ENCODE measurements at regions of chr17 and their contacts with region 1.

Region 1: DNA sequence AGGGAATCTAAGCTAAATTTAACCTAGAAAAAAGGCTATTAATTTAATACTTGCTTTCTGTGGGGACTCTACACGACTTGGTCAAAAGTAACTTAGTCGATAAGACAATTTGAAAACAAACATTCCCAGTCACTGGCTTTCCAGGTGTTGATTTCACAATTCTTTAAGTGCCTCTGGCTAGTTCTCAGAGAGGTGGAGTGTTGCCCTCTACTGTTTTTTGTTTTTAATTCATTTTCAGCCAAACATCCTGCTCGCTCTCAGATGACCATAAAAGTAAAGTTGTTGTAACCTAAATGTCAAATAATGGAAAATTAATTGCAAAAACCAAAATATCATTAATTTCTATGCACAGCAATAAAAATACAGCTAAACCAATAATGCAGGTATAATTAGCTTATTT is 107.1 kb downstream of the MYO1D start:
- DNase-seq: no peak
- ATAC-seq: no peak
- H3K4me3 ChIP-seq: no peak overlapping the region
- H3K27ac ChIP-seq: no peak overlapping the region
- H3K4me1 ChIP-seq: no peaks in the 10 kb centered on the region
- H3K27me3 ChIP-seq: no peaks in the 10 kb centered on the region
- CTCF ChIP-seq: peak in 1 of 12 donors; percentile 8
- POLR2A ChIP-seq: no peak

Region 2: GRCh38 chr17:32627239-32627996 is 142.4 kb before region 1 on chr17:
- intact Hi-C with region 1: no loop called
- DNase-seq: no peak
- ATAC-seq: no peak
- H3K4me3 ChIP-seq: no peak overlapping the region
- H3K27ac ChIP-seq: no peak overlapping the region
- H3K4me1 ChIP-seq: peaks cover 0 to 5% (median 0%) of the 10 kb centered on the region in 12 donors
- H3K27me3 ChIP-seq: no peaks in the 10 kb centered on the region
- CTCF ChIP-seq: no peak
- POLR2A ChIP-seq: no peak

Region 3: DNA sequence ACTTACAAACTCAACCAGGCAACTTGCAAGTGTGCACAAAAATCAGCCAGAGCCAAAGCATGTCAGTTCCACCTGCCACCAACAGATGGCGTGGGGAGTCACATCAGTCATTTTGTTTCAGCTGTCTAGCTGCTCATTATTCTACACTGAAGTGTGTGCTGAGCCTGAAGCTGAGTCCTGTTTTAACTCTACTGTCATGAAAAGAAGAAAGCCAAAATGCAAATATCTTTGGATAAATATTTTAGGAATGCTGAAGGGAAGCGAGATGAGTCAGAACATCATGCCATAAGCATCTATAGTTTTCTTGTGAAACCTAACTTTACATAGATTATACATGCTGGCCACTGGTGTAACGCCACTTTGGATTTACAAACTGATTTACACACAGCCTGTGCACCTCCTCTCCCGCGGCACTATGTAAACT is 110.4 kb before region 1 on chr17:
- intact Hi-C with region 1: loop called in 1 of 10 experiments (anchors 10 kb)
- DNase-seq: peak; percentile 52 to 68 (median 63)
- ATAC-seq: peak; percentile 44 to 87 (median 83)
- H3K4me3 ChIP-seq: no peak overlapping the region
- H3K27ac ChIP-seq: no peak overlapping the region
- H3K4me1 ChIP-seq: peaks cover 0 to 21% (median 8%) of the 10 kb centered on the region in 12 donors
- H3K27me3 ChIP-seq: no peaks in the 10 kb centered on the region
- CTCF ChIP-seq: peak; percentile 78 to 94 (median 90)
- POLR2A ChIP-seq: no peak

Region 4: GRCh38 chr17:32697728-32698625 is 71.9 kb before region 1 on chr17:
- intact Hi-C with region 1: no loop called
- DNase-seq: no peak
- ATAC-seq: no peak
- H3K4me3 ChIP-seq: no peak overlapping the region
- H3K27ac ChIP-seq: no peak overlapping the region
- H3K4me1 ChIP-seq: no peaks in the 10 kb centered on the region
- H3K27me3 ChIP-seq: no peaks in the 10 kb centered on the region
- CTCF ChIP-seq: no peak
- POLR2A ChIP-seq: no peak

Region 5: GRCh38 chr17:32723310-32723955 is 46.4 kb before region 1 on chr17:
- intact Hi-C with region 1: no loop called
- DNase-seq: peak in 3 of 5 donors; percentile 20 to 71 (median 56)
- ATAC-seq: peak in 3 of 4 donors; percentile 64 to 91 (median 65)
- H3K4me3 ChIP-seq: no peak overlapping the region
- H3K27ac ChIP-seq: no peak overlapping the region
- H3K4me1 ChIP-seq: no peaks in the 10 kb centered on the region
- H3K27me3 ChIP-seq: no peaks in the 10 kb centered on the region
- CTCF ChIP-seq: no peak
- POLR2A ChIP-seq: no peak